ENCODE measurements at regions of chr18 and their contacts with region 1.

Region 1: DNA sequence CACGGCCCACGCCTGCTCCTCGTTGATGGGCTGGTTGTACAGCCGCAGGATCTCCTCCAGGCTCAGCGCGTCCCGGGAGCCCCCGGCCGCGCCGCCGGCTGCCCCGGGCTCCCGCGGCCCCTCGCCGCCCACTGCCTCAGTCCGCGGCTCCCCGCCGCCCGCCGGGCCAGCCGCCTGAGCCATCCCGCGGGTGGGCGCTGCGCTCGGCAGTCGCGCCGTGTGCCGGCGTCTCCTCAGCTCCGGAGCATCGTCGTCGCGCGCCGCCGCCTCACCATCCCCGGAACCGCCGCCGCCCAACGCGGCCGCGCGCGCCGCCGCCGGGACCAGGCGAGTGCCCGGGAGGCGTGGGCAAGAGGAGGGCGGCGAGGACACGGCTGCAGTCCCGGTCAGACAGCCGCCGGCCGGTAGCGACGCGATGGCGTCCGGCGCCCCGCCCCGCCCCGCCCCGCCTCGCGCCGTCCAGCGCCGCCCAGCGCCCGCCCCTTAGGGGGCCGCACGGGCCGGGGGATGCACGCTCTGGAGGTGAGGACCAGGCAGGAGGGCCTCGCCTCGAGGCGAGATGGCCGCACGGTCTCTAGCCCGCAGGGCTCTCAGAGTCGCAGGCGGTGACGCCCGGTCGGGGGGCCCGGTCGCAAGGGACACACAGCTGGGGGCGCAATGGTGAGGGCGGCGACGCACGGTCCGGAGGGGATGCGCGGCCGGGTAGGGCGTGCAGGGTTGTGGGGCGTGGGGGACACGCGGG is at the start of gene SPIRE1:
- DNase-seq: no peak
- ATAC-seq: peak; percentile 92
- H3K4me3 ChIP-seq: peak within 1 kb of the TSS; percentile 62 to 73
- H3K27ac ChIP-seq: peak within 1 kb of the TSS; percentile 84
- H3K4me1 ChIP-seq: peaks cover 14% of the 10 kb centered on the region
- H3K27me3 ChIP-seq: no peaks in the 10 kb centered on the region
- CTCF ChIP-seq: no peak
- total RNA-seq, gene SPIRE1: 45.5 TPM

Region 2: GRCh38 chr18:12391618-12392165 is 266.2 kb before region 1 on chr18:
- CTCF ChIA-PET with region 1: no interaction called
- POLR2A ChIA-PET with region 1: no interaction called
- in situ Hi-C with region 1: no loop called
- intact Hi-C with region 1: loop called (anchors 1 kb)
- DNase-seq: peak; percentile 55
- ATAC-seq: peak; percentile 84
- H3K4me3 ChIP-seq: no peak overlapping the region
- H3K27ac ChIP-seq: no peak overlapping the region
- H3K4me1 ChIP-seq: no peaks in the 10 kb centered on the region; the same call in 1 of the 2 replicates
- H3K27me3 ChIP-seq: no peaks in the 10 kb centered on the region
- CTCF ChIP-seq: peak; percentile 94

Region 3: GRCh38 chr18:12552884-12553242 is 105.0 kb before region 1 on chr18:
- CTCF ChIA-PET with region 1: no interaction called
- POLR2A ChIA-PET with region 1: no interaction called
- in situ Hi-C with region 1: no loop called
- intact Hi-C with region 1: loop called (anchors 10 kb)
- DNase-seq: no peak
- ATAC-seq: no peak
- H3K4me3 ChIP-seq: no peak overlapping the region
- H3K27ac ChIP-seq: no peak overlapping the region
- H3K4me1 ChIP-seq: no peaks in the 10 kb centered on the region
- H3K27me3 ChIP-seq: no peaks in the 10 kb centered on the region
- CTCF ChIP-seq: no peak

Region 4: DNA sequence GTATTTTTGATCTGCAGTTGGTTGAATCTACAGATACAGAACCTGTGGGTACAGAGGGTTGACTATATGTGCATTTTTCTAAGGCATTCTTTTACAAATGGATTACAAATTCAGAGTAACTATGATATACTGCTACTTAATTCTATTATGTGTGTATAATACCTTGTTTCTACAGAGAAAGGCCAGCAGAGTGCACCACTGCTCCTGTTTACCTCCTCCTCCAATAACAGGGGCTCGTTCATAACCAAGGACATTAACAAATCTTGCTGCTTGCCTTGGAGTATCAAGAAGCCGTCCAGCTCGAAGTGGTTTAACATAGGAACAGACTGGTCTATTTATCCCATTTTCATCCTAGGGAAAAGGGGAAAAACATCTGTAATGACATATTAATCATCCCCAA is 28.2 kb after region 1 on chr18:
- CTCF ChIA-PET with region 1: no interaction called
- POLR2A ChIA-PET with region 1: no interaction called
- in situ Hi-C with region 1: no loop called
- intact Hi-C with region 1: no loop called
- DNase-seq: no peak
- ATAC-seq: peak; percentile 82
- H3K4me3 ChIP-seq: no peak overlapping the region
- H3K27ac ChIP-seq: no peak overlapping the region
- H3K4me1 ChIP-seq: no peaks in the 10 kb centered on the region
- H3K27me3 ChIP-seq: no peaks in the 10 kb centered on the region
- CTCF ChIP-seq: no peak

Measured in Panc1 (cell line).